Activated CD4-positive, alpha-beta memory T cell treated with anti-CD3 and anti-CD28 coated beads for 36 hours (primary cell): ENCODE measurements at regions of chr4 and their contacts with region 1.

Region 1: DNA sequence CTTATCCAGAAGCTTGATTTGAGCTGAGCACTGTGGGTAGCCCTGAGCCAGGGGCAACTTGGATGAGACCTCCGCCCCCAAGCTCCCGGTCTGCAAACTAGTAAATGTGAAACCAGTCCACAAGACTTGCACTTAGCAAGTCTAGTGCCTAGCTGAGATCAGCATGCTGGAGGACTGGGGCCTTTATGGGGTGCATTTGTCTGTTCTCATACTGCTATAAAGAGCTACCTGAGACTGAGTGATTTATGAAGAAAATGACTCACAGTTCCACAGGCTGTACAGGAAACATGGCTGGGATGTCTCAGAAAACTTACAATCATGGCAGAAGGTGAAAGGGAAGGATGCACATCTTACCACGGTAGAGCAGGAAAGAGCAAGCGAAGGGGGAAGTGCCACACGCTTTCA is 42.1 kb upstream of the HOPX start:
- DNase-seq: peak; percentile 77
- H3K4me3 Mint-ChIP-seq: peak overlapping the region; percentile 5
- H3K27ac Mint-ChIP-seq: peak overlapping the region; percentile 80
- H3K4me1 Mint-ChIP-seq: peaks cover 23% of the 10 kb centered on the region
- H3K27me3 Mint-ChIP-seq: peaks cover 1% of the 10 kb centered on the region

Region 2: DNA sequence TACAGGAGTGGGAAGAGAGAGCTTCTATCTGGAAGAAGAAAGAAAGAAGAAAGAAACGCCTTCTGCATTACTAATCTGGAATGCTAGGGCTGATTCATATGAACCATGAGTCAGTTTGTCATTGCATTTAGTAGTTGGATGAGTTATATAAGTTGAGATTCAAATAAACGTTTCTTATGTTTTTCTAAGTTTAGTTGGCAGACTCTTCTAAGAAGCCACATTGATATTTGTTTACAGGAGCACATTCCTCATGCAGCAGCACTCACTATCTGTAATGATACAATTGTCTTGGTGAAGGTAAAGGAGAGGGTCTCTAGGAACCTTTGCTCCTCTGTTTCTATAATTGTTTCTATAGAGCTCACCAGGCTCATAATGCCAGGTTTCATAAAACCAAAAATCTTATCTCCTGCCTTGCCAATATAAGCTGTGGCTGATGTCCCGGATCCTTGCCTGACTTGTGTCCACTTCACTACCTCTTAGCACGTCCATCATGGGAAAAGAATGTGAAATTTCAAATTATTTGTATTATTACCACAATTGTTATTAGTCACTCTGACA is 81.6 kb before region 1 on chr4:
- CTCF ChIA-PET with region 1: interaction called, 3 read pairs
- POLR2A ChIA-PET with region 1: interaction called, 3 read pairs
- intact Hi-C with region 1: loop called (anchors 1 kb)
- DNase-seq: no peak
- H3K4me3 Mint-ChIP-seq: no peak overlapping the region
- H3K27ac Mint-ChIP-seq: peak overlapping the region; percentile 80
- H3K4me1 Mint-ChIP-seq: peaks cover 32% of the 10 kb centered on the region
- H3K27me3 Mint-ChIP-seq: peaks cover 8% of the 10 kb centered on the region

Region 3: GRCh38 chr4:56757821-56758411 is 34.7 kb after region 1 on chr4:
- CTCF ChIA-PET with region 1: no interaction called
- POLR2A ChIA-PET with region 1: interaction called, 3 read pairs
- intact Hi-C with region 1: loop called (anchors 1 kb)
- DNase-seq: peak; percentile 90
- H3K4me3 Mint-ChIP-seq: peak overlapping the region; percentile 40
- H3K27ac Mint-ChIP-seq: peak overlapping the region; percentile 87
- H3K4me1 Mint-ChIP-seq: peaks cover 31% of the 10 kb centered on the region
- H3K27me3 Mint-ChIP-seq: peaks cover 3% of the 10 kb centered on the region

Region 4: DNA sequence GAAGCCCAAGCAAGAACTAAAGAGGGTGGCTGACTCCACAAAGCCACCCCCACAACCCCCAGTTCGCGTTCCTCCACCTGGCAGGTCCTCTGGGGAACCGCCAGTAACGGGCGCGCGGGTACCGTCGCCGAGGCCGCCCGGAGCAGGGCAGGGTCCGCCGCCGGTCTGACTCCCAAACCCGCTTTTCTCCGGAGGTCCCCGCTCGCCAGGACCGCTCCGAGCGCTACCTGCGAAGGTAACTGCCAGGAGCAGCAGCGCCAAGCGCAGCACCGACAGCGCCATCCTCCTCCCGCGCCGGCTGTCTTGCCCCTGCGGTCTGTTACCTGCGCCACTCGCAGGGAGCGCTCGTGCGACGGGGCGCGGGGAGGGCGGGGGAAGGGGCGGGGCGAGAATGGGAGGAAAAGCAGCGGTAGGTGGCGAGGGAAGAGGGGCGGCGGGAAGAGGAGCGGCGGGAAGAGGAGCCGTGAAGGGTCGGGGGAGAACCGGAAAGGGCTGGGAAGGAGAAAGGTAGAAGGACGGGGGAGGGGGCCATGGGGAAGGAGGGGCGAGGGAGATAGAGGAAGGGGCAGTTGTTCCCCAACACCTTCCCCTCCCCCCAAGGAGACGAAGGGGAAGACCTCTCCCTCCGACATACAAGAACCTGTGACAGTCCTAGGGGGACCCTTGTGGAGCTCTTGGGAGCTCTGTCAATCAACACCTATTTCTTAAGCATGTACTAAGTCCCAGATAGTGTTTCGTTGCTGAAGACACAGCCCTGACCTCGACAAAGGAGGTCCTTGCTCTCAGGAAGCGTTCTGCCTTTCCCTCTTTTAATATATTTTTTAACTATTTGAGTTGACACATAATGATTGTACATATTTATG is 98.4 kb after region 1 on chr4 and contains the start of gene SPINK2:
- CTCF ChIA-PET with region 1: no interaction called
- POLR2A ChIA-PET with region 1: no interaction called
- intact Hi-C with region 1: loop called (anchors 5 kb)
- DNase-seq: peak; percentile 77
- H3K4me3 Mint-ChIP-seq: peak within 1 kb of the TSS; percentile 61
- H3K27ac Mint-ChIP-seq: no peak within 1 kb of the TSS
- H3K4me1 Mint-ChIP-seq: peaks cover 27% of the 10 kb centered on the region
- H3K27me3 Mint-ChIP-seq: peaks cover 12% of the 10 kb centered on the region
- total RNA-seq, gene SPINK2: 0.51 TPM in 1 of 2 experiments, not detected in the other